Cardiac septum (tissue), 1 donor: ENCODE measurements at regions of chr20 and their contacts with region 1.

Region 1: DNA sequence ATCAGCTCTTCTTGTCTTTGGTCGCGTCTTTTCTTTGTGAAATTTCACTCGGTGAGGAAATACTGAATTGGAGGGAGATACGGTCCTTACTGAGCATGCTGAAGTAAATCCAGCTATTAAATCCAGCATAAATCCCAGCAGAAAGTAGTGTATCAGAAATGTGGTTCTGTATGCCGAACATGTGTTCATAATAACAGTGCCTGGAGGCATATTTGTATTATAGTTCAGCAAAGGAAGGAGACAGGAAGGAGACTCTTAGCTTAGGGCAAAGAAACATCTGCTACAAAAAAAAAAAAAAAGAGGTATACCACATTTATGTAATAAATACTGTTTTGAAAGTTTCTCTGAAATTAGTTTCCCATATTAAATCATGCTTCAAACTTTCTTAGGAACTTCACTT is 211.8 kb downstream of the PLCB4 start:
- DNase-seq: no peak

Region 2: DNA sequence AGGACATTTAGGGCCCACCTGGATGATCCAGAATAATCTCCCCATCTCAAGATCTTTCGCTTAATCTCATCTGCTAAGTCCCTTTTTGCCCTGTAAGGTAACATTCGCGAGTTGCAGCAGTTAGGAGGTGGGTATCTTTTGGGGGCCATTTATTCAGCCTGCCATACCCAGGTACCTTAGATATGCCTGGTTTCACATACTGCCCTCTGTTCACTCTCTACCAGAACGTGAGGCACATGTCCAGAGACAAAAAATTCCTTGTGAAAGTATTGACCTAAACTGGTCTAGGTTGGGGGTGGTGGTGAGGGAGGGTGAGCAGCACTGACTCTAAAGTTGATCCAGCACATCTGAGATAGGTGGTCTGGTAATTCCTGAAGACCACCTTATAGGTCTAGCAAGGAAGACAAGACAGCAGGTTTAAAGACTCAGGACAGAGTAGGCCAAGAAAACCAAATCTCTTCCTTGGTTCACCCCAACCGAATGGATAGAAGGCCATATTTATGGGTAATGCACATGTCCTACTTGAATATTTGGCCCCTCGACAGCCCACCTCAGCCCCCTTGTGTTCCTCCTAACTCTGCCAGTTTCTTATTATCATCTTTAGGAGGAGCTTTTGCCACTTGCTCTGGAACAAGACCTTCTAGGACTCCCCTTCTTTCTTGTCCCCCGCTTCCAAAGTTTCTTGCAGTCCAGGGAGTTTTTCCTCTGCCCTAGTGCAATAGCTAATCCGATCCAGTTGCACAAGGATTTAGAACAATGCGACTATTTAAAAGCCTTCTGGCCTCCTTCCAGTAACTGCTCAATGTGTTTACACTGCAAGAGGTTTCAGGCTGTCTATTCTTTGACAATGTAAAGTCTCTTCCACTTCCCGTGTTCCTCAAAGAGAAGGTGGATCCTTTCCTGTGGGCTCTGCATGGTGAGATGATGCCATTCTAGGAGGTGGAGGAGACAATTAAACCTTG is 20.7 kb after region 1 on chr20:
- intact Hi-C with region 1: loop called (anchors 2 kb)
- DNase-seq: no peak

Region 3: GRCh38 chr20:9323622-9324021 is 43.0 kb after region 1 on chr20:
- intact Hi-C with region 1: no loop called
- DNase-seq: no peak

Region 4: GRCh38 chr20:9359561-9360308 is 79.1 kb after region 1 on chr20:
- intact Hi-C with region 1: no loop called
- DNase-seq: no peak

Region 5: DNA sequence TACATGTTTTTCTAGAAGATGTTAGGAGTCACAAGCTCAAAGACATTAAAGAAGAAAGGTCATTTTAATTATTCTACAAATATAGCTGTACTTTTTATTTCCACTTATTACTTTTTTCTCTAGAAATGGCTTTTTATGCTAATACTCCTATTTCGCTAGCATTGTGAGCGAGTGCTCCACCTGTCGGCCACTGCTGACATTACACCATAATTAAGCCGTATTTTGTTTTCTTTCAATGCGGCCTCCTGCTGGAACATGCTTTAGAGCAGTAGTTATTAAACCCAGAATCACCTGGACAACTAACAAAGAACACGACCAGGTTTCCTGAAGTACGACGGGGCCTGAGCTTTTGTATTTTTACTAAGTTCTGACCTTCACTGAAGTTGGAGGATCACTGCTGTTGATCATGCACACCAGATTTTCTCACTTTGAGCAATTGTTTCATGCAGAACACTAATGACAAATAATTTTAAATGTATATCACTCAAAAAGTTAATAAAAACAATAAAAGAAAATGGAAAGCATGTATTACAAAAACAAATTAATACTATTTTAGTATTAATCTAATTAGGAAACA is 632.3 kb after region 1 on chr20:
- intact Hi-C with region 1: no loop called
- DNase-seq: no peak